ENCODE measurements at regions of chr10 and their contacts with region 1.

Region 1: GRCh38 chr10:96395931-96396877 is 37.4 kb upstream of the OPALIN start:
- DNase-seq: no peak
- H3K4me3 ChIP-seq: no peak overlapping the region
- H3K27ac ChIP-seq: no peak overlapping the region
- H3K4me1 ChIP-seq: no peaks in the 10 kb centered on the region
- H3K27me3 ChIP-seq: peaks cover 0 to 81% (median 4%) of the 10 kb centered on the region in 4 donors
- CTCF ChIP-seq: peak; percentile 60 to 87 (median 83)
- POLR2A ChIP-seq: no peak

Region 2: GRCh38 chr10:96513698-96514561 is 117.7 kb after region 1 on chr10 and contains the start of gene TLL2:
- intact Hi-C with region 1: loop called (anchors 10 kb)
- DNase-seq: peak; percentile 18
- H3K4me3 ChIP-seq: peak within 1 kb of the TSS; percentile 39 to 76 (median 48)
- H3K27ac ChIP-seq: no peak within 1 kb of the TSS
- H3K4me1 ChIP-seq: peaks cover 22 to 26% (median 24%) of the 10 kb centered on the region in 3 donors
- H3K27me3 ChIP-seq: peaks cover 0 to 41% (median 4%) of the 10 kb centered on the region in 4 donors
- CTCF ChIP-seq: peak; percentile 28 to 79 (median 62)
- POLR2A ChIP-seq: no peak
- total RNA-seq, gene TLL2: 0.40 to 0.62 TPM in 2 of 4 donors, not detected in the others